Endothelial cell of umbilical vein (primary cell): ENCODE measurements at regions of chr12 and their contacts with region 1.

Region 1: GRCh38 chr12:109775172-109775881 is 57.9 kb downstream of the TRPV4 start:
- DNase-seq: peak; percentile 62
- H3K4me3 ChIP-seq: no peak overlapping the region
- H3K27ac ChIP-seq: no peak overlapping the region
- H3K4me1 ChIP-seq: no peaks in the 10 kb centered on the region
- H3K27me3 ChIP-seq: no peaks in the 10 kb centered on the region
- CTCF ChIP-seq: peak; percentile 91
- POLR2A ChIP-seq: no peak

Region 2: GRCh38 chr12:109573029-109573913 is 202.1 kb before region 1 on chr12 and contains the starts of genes MMAB and MVK:
- CTCF ChIA-PET with region 1: interaction called, 16 read pairs
- POLR2A ChIA-PET with region 1: no interaction called
- dilution Hi-C with region 1: no loop called
- intact Hi-C with region 1: loop called (anchors 1 kb)
- DNase-seq: peak; percentile 99
- H3K4me3 ChIP-seq: peak within 1 kb of the TSS; percentile 27 to 83 (median 82)
- H3K27ac ChIP-seq: peak within 1 kb of the TSS; percentile 42
- H3K4me1 ChIP-seq: peaks cover 16% of the 10 kb centered on the region
- H3K27me3 ChIP-seq: no peaks in the 10 kb centered on the region
- CTCF ChIP-seq: no peak
- POLR2A ChIP-seq: peak; percentile 73
- total RNA-seq, gene MMAB: 45.9 and 46.0 TPM in 2 replicates
- total RNA-seq, gene MVK: 40.3 and 42.6 TPM in 2 replicates

Region 3: GRCh38 chr12:109586385-109587296 is 188.7 kb before region 1 on chr12:
- CTCF ChIA-PET with region 1: interaction called, 10 read pairs
- POLR2A ChIA-PET with region 1: no interaction called
- dilution Hi-C with region 1: no loop called
- intact Hi-C with region 1: no loop called
- DNase-seq: no peak
- H3K4me3 ChIP-seq: no peak overlapping the region
- H3K27ac ChIP-seq: no peak overlapping the region
- H3K4me1 ChIP-seq: no peaks in the 10 kb centered on the region
- H3K27me3 ChIP-seq: no peaks in the 10 kb centered on the region
- CTCF ChIP-seq: no peak
- POLR2A ChIP-seq: no peak

Region 4: GRCh38 chr12:109597795-109598427 is 177.4 kb before region 1 on chr12:
- CTCF ChIA-PET with region 1: interaction called, 252 read pairs
- POLR2A ChIA-PET with region 1: no interaction called
- dilution Hi-C with region 1: no loop called
- intact Hi-C with region 1: loop called (anchors 1 kb)
- DNase-seq: peak; percentile 78
- H3K4me3 ChIP-seq: no peak overlapping the region
- H3K27ac ChIP-seq: no peak overlapping the region
- H3K4me1 ChIP-seq: peaks cover 3% of the 10 kb centered on the region
- H3K27me3 ChIP-seq: no peaks in the 10 kb centered on the region
- CTCF ChIP-seq: peak; percentile 95 to 100
- POLR2A ChIP-seq: no peak

Region 5: DNA sequence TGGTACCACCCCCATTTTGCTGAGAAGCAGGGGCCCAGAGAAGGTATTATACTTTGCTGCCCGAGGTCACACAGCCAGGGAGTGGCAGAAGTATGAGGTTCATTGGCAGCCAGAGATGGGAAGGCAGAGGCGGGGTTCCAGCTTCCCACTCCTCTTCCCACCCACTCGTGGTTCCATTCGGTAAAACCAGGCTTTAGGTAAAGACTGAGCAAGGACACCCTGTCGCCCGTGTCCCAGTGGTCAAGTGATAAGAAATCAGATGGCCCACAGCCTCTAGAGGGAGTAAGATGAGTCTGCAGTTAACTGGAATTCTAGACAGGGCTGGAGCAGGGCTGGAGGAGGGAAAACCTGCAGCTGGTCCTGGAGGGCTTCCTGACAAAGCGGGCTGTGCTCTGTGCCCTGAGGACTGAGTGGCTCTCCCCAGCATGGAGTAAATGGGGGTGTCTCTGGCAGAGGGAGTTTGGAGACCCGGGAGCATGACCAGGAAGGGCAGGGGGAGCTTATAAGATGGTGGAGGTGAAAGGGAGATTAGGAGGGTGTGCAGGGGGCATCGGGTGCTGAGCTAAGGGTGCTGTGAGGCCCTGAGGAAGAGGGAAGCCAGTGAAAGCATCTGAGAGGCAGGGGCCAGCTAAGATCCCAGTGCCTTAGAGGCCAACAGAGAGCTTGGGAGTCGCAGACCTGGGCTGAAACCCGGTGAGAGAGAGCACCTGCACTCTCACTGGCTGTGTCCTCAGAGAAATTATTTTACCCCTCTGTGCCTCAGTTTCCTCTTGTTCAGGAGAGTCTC is 55.9 kb before region 1 on chr12:
- CTCF ChIA-PET with region 1: interaction called, 16 read pairs
- POLR2A ChIA-PET with region 1: no interaction called
- dilution Hi-C with region 1: no loop called
- intact Hi-C with region 1: loop called (anchors 5 kb)
- DNase-seq: no peak
- H3K4me3 ChIP-seq: no peak overlapping the region
- H3K27ac ChIP-seq: no peak overlapping the region
- H3K4me1 ChIP-seq: no peaks in the 10 kb centered on the region
- H3K27me3 ChIP-seq: peaks cover 14 to 16% of the 10 kb centered on the region in 2 experiments
- CTCF ChIP-seq: peak; percentile 19 to 25
- POLR2A ChIP-seq: no peak

Region 6: DNA sequence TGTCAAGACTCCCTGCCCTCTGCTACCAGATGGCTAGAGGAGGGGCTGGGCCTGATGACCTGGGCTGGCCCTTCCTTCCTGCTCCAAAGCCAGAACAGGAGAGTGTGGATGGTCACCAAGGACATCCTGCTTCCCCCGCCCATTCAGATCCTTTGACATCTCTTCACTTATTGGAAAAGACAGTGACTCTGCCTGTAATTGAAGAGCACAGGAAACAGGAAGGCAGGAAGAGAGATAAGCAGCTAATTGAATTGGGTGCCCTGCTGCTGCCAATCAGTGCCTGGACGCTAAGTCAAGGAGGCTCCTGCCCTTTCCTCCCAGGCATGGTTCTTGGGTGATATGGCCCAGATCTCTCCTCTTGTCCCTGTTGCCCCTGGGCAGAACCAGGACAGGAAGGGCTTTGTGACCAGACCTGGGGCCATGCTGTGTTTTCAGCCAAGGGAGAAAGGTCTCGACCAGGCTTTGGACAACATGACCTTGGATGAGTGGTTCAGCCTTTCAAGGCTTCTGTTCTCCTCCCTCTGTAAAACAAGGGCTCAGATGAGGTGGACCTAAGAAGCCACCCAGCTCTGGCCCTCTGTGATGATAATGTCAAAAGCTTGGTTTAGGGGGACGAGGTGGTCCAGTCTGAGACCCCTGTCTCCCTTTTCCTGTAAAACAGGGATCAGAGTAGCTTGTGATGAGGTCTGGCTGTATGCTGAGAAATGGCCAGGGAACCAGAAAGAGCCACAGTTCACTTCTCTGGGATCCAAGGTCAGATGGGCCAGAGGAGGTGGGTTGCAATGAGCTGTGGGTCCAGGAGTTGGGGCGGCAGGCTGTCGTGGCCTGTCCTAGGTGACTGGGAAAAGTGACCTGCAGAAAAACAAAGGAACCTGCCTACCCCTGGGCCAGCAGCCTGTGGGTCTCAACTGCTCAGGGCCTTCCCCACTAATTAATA is 22.9 kb before region 1 on chr12:
- CTCF ChIA-PET with region 1: interaction called, 15 read pairs
- POLR2A ChIA-PET with region 1: interaction called, 11 read pairs
- dilution Hi-C with region 1: no loop called
- intact Hi-C with region 1: no loop called
- DNase-seq: no peak
- H3K4me3 ChIP-seq: no peak overlapping the region
- H3K27ac ChIP-seq: no peak overlapping the region
- H3K4me1 ChIP-seq: no peaks in the 10 kb centered on the region
- H3K27me3 ChIP-seq: no peaks in the 10 kb centered on the region
- CTCF ChIP-seq: no peak
- POLR2A ChIP-seq: no peak

Region 7: DNA sequence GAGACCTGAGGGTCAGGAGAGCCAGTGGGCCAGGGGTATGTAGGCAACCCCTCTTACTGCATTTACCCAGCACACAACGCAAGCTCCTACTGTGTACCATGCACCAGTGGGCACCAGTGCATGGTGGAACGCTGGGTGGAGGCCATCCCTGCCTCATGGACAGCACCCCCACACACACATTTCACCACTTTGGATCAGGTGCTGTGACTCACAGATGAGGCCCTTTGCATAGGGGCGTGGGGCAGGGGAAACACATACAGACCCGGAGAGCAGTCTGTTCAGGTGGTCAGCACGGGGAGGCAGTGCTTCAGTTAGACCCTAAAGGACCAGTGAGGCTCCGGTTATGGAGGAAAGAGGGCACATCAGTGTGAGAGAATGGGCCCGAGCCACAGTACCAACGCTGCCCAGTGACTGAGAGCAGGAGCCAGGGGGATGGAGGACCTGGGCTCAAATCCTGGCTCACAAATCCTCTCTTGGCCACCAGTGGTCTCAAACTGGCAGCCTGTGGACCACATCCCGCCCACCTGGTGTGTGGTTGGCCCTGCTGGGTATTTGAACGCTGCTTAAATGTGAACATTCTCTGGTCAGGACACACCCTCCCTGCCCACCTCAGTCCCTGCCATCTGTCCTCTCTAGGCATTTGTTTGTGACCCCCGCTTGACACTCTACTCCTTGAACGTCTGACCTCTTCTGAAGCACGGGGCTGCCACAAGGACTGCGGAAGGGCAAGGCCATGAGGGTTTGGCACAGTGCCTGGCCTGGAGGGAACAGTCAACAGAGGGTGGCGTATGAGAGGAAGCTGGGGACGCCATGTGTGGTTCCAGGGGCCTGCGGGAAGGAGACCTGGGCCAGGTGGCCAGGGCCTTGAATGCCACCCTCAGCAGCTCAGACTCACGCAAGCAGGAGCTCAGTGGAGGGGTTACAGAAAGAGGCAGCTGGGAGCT is 15.0 kb before region 1 on chr12:
- CTCF ChIA-PET with region 1: interaction called, 15 read pairs
- POLR2A ChIA-PET with region 1: interaction called, 11 read pairs
- dilution Hi-C with region 1: no loop called
- intact Hi-C with region 1: no loop called
- DNase-seq: no peak
- H3K4me3 ChIP-seq: no peak overlapping the region
- H3K27ac ChIP-seq: no peak overlapping the region
- H3K4me1 ChIP-seq: no peaks in the 10 kb centered on the region
- H3K27me3 ChIP-seq: no peaks in the 10 kb centered on the region
- CTCF ChIP-seq: no peak
- POLR2A ChIP-seq: no peak